AG04449 (cell line): ENCODE measurements at regions of chrX and their contacts with region 1.

Region 1: GRCh38 chrX:47497273-47497672 is 14.3 kb upstream of the ZNF41 start:
- DNase-seq: no peak
- H3K4me3 ChIP-seq: no peak overlapping the region
- CTCF ChIP-seq: peak; percentile 16

Region 2: DNA sequence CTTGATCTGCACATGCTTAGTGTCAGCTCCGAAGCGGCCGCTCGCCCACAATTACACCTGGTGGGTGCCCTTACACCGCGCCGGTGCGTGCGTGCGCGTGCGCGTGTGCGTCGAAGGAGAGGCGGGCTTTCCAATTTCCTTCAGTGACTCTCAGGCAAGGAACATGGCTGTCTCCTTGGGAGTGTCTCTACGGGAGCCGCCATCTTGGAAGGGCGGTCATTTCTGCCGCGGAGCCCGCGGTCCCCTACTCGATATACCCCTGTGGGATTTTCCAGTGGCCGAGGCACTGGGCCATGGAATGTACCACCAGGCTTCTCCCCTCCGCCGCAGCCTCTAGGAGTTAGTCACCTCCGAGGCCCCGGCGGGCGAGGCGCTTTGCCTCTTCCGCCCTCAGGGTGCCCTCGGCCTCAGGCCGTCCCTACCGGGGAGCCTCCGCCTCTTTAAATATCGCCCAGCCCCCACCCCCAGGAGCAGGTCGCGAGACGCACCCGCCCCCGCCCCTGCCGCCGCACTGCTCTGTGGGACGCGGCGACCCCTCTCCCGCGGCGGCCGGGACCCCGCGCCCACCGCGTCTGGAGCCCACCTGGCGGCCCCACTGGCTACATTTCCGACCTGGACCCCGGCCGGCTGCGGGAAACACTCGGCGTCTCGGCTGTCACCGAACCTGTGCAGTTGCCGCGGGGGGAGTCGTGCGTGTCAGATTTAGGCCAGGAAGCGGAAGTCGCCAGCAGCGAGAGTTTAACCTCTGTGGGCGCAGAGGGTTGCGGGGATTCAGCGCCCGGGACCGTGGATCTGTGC is 14.6 kb before region 1 on chrX and contains the start of gene ZNF41:
- CTCF ChIA-PET with region 1: interaction called, 10 read pairs
- POLR2A ChIA-PET with region 1: interaction called, 3 read pairs
- DNase-seq: no peak
- H3K4me3 ChIP-seq: peak within 1 kb of the TSS; percentile 66
- CTCF ChIP-seq: no peak

Region 3: DNA sequence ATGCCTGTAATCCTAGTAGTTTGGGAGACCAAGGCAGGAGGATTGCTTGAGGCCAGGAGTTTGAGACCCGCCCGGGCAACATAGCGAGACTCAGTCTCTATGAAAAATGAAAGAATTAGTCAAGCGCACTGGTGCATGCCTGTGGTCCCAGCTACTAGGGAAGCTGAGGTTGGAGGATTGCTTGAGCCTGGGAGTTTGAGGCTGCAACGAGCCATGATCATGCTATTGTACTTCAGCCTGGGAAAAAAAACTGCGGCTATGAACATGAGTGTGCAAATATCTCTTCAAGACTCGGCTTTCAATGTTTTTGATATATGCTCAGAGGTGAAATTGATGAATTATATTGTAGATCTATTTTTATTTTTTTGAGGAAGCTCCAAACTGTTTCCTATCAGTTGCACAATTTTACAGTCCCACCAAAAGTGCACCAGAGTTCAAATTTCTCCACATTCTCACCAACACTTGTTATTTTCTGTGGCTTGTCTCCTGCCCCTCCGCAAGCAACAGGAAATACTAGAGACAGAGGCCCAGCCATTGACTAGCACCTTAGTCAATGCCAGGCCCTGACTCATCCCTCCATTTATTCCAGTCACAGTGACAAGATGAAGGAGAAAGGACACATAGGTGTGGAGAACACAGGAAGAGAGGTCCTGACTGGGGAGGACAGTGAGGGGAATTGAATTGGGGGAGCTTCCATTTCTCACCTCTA is 18.8 kb after region 1 on chrX:
- CTCF ChIA-PET with region 1: interaction called, 38 read pairs
- POLR2A ChIA-PET with region 1: no interaction called
- DNase-seq: no peak
- H3K4me3 ChIP-seq: no peak overlapping the region
- CTCF ChIP-seq: no peak

Region 4: DNA sequence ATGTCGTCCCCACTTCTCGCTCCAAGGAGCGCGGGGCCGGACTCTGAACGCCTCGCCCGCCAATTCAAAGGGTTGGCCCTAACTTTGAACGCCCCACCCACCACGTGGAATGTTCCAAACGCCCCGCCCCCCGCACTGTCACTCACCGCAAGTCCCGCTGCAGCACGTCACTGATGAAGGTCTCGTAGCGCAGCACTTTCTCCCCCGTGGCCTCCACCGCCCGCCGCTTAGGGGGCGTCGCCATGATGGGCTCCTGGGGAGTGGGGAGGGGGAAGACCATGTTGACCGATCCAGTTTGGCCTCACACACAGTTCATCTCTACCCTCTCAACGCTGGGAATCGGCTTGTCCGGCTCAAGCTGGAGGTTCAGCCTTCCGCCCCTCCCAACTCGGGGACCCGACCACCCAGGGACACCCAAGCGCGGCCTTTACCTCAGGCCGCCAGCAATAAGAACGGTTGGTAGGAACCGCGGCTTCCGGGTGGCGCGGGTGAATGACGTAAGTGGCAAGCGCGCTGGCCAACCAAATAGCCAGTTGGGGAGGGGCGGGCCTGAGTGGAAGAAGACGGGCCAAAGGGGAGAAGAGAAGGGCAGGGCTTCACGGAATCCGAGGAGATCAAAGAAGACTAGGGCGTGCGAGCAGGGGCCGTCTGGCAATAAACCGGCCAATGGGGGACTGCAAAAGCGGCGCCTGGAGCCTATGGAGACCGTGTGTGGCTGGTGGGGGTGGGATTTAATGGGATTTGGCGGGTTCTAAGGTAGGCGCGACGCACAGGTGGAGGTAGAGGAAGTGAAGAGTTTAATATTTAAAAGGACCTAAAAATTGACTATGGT is 161.6 kb after region 1 on chrX and contains the start of gene UXT:
- CTCF ChIA-PET with region 1: no interaction called
- POLR2A ChIA-PET with region 1: no interaction called
- DNase-seq: peak; percentile 84
- H3K4me3 ChIP-seq: peak within 1 kb of the TSS; percentile 72
- CTCF ChIP-seq: no peak